ENCODE measurements at regions of chr20 and their contacts with region 1.

Region 1: GRCh38 chr20:1888796-1889463 is 6.3 kb upstream of the SIRPA start:
- DNase-seq: no peak
- H3K4me3 ChIP-seq: no peak overlapping the region
- H3K27ac ChIP-seq: no peak overlapping the region
- H3K4me1 ChIP-seq: peaks cover 46% of the 10 kb centered on the region
- H3K27me3 ChIP-seq: no peaks in the 10 kb centered on the region
- CTCF ChIP-seq: no peak
- POLR2A ChIP-seq: no peak

Region 2: DNA sequence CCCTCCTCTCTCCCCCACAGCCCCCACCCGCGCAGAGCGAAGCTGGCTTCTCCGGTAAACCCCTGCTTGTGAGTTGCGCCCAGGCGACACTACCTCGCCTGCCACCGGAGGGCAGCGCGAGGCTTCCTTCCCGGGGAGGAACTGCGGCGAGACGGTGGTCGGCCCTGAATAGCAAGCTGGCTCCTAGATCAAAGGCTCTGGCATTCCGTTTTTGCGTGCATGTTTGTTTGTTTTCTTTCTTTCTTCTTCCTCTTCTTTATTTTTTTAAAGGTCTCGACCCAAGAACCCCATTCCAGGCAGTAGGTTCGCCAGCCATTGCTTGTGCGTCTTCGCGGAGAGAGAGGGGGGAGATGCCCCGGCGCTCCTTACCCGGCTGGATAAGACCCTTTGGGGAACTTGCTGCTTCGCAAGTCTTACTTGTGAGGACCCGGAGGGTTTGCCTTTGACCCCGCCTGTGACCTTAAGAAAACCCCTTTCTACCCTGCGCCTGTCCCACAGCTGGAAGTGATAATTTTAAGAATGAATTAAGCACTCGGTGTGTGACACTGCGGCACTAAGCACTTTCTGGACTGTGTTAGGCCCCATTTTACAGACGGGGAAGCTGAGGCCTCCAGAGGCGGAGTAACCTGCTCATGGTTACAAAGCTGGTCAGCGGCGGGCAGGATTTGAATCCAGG is 86.4 kb before region 1 on chr20:
- intact Hi-C with region 1: loop called (anchors 5 kb)
- DNase-seq: peak; percentile 86 to 93
- H3K4me3 ChIP-seq: peak overlapping the region; percentile 41 to 58
- H3K27ac ChIP-seq: peak overlapping the region; percentile 76
- H3K4me1 ChIP-seq: peaks cover 39% of the 10 kb centered on the region
- H3K27me3 ChIP-seq: no peaks in the 10 kb centered on the region
- CTCF ChIP-seq: peak; percentile 12 to 66 (median 33)
- POLR2A ChIP-seq: no peak

Region 3: DNA sequence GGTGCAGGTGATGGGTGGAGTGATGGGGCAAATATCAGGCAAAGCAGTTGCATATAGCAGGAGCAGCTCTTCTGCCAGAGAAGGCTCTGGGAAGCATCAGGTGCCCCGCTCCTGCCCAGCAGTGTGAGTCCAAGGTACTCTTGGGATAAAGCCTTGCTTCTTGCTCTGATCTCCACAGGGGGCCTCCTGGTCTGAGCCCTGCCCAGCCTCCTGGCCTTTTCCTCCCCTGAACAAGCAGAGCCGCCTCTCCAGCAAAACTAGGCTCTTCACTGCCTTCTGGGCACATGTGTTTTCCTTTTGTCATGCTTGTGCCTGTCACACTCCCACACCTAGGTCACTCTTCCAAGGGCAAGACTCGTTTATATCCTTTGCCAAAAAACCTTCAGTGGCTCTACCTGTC is 40.5 kb after region 1 on chr20:
- intact Hi-C with region 1: loop called (anchors 2 kb)
- DNase-seq: no peak
- H3K4me3 ChIP-seq: no peak overlapping the region
- H3K27ac ChIP-seq: no peak overlapping the region
- H3K4me1 ChIP-seq: peaks cover 14% of the 10 kb centered on the region
- H3K27me3 ChIP-seq: no peaks in the 10 kb centered on the region
- CTCF ChIP-seq: no peak
- POLR2A ChIP-seq: no peak

Region 4: DNA sequence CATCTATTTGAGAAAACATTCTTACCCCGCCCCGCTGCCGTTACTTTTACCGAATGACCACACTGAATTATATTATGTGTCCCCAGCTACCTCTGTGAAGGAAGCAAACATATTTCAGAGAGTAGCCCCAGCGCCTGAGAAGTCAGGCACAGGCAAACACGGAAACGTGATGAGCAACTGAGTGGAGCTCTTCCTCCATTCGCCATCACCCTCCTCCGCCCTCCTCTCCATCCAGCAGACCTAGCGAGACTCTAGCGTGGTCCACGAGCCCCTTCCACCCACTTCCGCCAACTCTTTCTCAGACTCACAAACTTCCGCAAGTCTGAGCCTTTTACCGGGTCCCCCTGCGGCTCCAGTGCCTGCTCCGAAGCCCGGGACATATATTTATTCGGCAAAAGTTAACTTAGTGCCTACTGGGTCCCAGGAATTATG is 581.1 kb after region 1 on chr20:
- intact Hi-C with region 1: loop called (anchors 10 kb)
- DNase-seq: no peak
- H3K4me3 ChIP-seq: peak overlapping the region; percentile 80 to 84
- H3K27ac ChIP-seq: peak overlapping the region; percentile 92
- H3K4me1 ChIP-seq: peaks cover 25% of the 10 kb centered on the region
- H3K27me3 ChIP-seq: no peaks in the 10 kb centered on the region
- CTCF ChIP-seq: no peak
- POLR2A ChIP-seq: no peak